ENCODE measurements at regions of chr6 and their contacts with region 1.

Region 1: GRCh38 chr6:71510057-71510713 is 221.6 kb downstream of the OGFRL1 start:
- DNase-seq: no peak
- H3K4me3 ChIP-seq: no peak overlapping the region
- H3K27ac ChIP-seq: peak overlapping the region; percentile 25 to 63 (median 48)
- H3K4me1 ChIP-seq: peaks cover 4 to 22% (median 19%) of the 10 kb centered on the region in 4 donors
- H3K27me3 ChIP-seq: no peaks in the 10 kb centered on the region
- CTCF ChIP-seq: peak; percentile 70 to 85 (median 78)
- EP300 ChIP-seq: no peak
- POLR2A ChIP-seq: no peak

Region 2: DNA sequence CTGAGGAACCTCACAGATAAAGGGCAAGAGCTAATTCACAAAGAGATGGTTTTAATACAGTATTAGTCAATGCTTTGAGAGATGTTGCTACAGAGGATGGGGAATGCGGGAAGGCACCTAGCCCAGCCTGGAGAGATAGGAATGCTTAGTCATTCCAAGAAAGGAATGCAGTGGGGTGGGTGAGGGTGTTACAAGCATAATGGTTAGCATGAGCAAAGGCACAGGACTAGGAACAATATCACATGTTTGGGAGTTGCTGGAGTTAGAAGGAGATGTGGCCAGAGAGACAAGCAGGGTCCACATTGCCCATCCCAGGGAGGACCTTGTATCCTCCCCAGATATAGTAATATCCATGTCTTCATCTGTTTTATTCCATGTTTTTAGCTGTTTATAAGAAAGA is 328.6 kb before region 1 on chr6:
- intact Hi-C with region 1: loop called (anchors 10 kb)
- DNase-seq: peak; percentile 29
- H3K4me3 ChIP-seq: no peak overlapping the region
- H3K27ac ChIP-seq: no peak overlapping the region
- H3K4me1 ChIP-seq: no peaks in the 10 kb centered on the region
- H3K27me3 ChIP-seq: no peaks in the 10 kb centered on the region
- CTCF ChIP-seq: no peak
- EP300 ChIP-seq: no peak
- POLR2A ChIP-seq: no peak

Region 3: GRCh38 chr6:71383901-71384489 is 126.2 kb before region 1 on chr6:
- intact Hi-C with region 1: loop called (anchors 2 kb)
- DNase-seq: no peak
- H3K4me3 ChIP-seq: no peak overlapping the region
- H3K27ac ChIP-seq: peak overlapping the region in 2 of 4 donors; percentile 30 to 40
- H3K4me1 ChIP-seq: peaks cover 28 to 58% (median 54%) of the 10 kb centered on the region in 4 donors
- H3K27me3 ChIP-seq: no peaks in the 10 kb centered on the region
- CTCF ChIP-seq: peak; percentile 49 to 77 (median 67)
- EP300 ChIP-seq: no peak
- POLR2A ChIP-seq: no peak

Measured in esophagus muscularis mucosa (tissue), 4 donors.